MCF 10A (cell line): ENCODE measurements at regions of chr14 and their contacts with region 1.

Region 1: DNA sequence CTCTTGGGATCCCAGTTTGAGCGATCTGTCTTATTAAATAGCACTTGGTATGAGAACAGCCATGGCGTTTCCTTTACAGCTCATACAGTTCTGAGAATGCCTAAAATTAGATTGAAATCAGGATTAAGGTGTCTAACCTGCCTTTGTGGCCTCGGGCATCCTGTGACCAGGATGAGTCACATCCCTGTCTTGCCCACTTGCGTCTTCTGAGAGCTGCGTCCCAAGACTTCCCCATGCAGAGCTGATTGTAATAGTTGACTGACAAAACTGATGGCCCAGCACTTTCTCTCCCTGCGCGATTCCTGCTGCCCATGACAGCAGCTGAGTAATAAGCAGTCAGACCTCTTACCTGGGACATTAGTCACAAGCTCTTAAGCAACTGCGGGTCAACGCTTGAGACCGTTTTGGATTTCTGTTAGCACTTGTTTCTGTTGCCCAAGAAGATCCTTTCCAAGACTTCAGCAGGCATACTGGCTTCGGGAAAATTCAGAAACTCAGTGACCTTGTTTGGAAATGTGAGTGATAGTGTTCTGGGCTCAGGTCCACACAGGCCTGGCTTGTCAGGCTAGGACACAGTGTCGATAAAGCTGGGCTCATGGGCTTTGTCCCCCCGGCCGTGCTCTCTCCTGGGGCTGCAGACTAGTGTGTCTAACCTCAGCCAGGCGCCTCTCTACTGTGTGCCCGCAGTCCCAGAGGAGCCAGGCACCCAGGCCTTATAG is 169.9 kb upstream of the HIF1A start:
- DNase-seq: peak; percentile 99
- H3K4me3 Mint-ChIP-seq: peak overlapping the region; percentile 1
- H3K27ac Mint-ChIP-seq: peak overlapping the region; percentile 75
- H3K4me1 Mint-ChIP-seq: peaks cover 56% of the 10 kb centered on the region
- H3K27me3 Mint-ChIP-seq: no peaks in the 10 kb centered on the region
- CTCF ChIP-seq: no peak

Region 2: GRCh38 chr14:61486930-61487495 is 38.4 kb before region 1 on chr14:
- CTCF ChIA-PET with region 1: interaction called, 3 read pairs
- POLR2A ChIA-PET with region 1: interaction called, 11 read pairs
- intact Hi-C with region 1: no loop called
- DNase-seq: no peak
- H3K4me3 Mint-ChIP-seq: no peak overlapping the region
- H3K27ac Mint-ChIP-seq: no peak overlapping the region
- H3K4me1 Mint-ChIP-seq: peaks cover 4% of the 10 kb centered on the region
- H3K27me3 Mint-ChIP-seq: no peaks in the 10 kb centered on the region
- CTCF ChIP-seq: no peak

Region 3: DNA sequence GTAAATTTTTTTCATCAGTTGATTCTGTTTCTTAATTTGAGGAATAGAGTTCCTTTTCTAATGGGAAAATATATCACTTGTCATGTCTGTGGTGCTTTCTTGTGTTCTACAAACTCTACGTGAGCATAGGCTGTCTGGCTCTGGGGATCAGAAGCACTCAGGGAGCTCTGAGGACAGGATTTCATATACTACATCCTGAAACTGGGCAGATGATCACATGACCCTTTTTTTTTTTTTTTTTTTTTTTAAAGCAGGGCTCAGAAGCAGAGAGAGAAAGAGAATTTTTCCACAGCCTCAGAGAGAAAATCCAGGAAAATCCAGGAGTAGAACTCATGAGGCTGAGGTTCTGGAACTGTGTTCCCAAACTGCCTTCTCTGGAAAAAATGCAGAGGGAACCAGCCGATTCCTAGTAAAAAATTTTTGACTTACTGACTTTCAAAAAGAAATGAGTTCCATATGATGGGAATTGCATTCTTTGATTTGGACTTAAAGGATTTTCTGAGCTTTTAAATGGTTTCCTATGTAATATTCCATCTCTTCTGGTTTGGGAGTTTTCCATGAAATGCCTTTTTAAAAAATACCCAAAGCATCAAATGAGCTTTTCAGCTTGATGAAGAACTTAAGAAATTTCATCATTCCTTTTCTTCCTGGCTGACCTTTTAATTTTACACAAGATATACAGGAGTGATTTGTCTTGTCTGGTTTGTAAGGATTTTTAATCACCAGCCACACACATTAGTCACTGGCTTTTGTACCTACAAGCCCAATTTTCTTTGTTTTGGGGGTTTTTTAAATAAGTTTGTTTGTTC is 13.2 kb before region 1 on chr14:
- CTCF ChIA-PET with region 1: interaction called, 3 read pairs
- POLR2A ChIA-PET with region 1: interaction called, 108 read pairs
- intact Hi-C with region 1: no loop called
- DNase-seq: peak; percentile 83
- H3K4me3 Mint-ChIP-seq: peak overlapping the region; percentile 38
- H3K27ac Mint-ChIP-seq: peak overlapping the region; percentile 61
- H3K4me1 Mint-ChIP-seq: peaks cover 19% of the 10 kb centered on the region
- H3K27me3 Mint-ChIP-seq: no peaks in the 10 kb centered on the region
- CTCF ChIP-seq: no peak

Region 4: GRCh38 chr14:61547186-61548086 is 22.0 kb after region 1 on chr14:
- CTCF ChIA-PET with region 1: interaction called, 4 read pairs
- POLR2A ChIA-PET with region 1: interaction called, 42 read pairs
- intact Hi-C with region 1: no loop called
- DNase-seq: peak; percentile 86
- H3K4me3 Mint-ChIP-seq: no peak overlapping the region
- H3K27ac Mint-ChIP-seq: peak overlapping the region; percentile 69
- H3K4me1 Mint-ChIP-seq: peaks cover 20% of the 10 kb centered on the region
- H3K27me3 Mint-ChIP-seq: no peaks in the 10 kb centered on the region
- CTCF ChIP-seq: no peak

Region 5: GRCh38 chr14:61561657-61562276 is 36.3 kb after region 1 on chr14:
- CTCF ChIA-PET with region 1: interaction called, 4 read pairs
- POLR2A ChIA-PET with region 1: interaction called, 108 read pairs
- intact Hi-C with region 1: no loop called
- DNase-seq: peak; percentile 97
- H3K4me3 Mint-ChIP-seq: peak overlapping the region; percentile 3
- H3K27ac Mint-ChIP-seq: peak overlapping the region; percentile 86
- H3K4me1 Mint-ChIP-seq: peaks cover 56% of the 10 kb centered on the region
- H3K27me3 Mint-ChIP-seq: no peaks in the 10 kb centered on the region
- CTCF ChIP-seq: no peak

Region 6: GRCh38 chr14:61573748-61574513 is 48.5 kb after region 1 on chr14:
- CTCF ChIA-PET with region 1: interaction called, 15 read pairs
- POLR2A ChIA-PET with region 1: interaction called, 51 read pairs
- intact Hi-C with region 1: loop called (anchors 2 kb)
- DNase-seq: peak; percentile 87
- H3K4me3 Mint-ChIP-seq: peak overlapping the region; percentile 31
- H3K27ac Mint-ChIP-seq: peak overlapping the region; percentile 91
- H3K4me1 Mint-ChIP-seq: peaks cover 42% of the 10 kb centered on the region
- H3K27me3 Mint-ChIP-seq: no peaks in the 10 kb centered on the region
- CTCF ChIP-seq: no peak